WTC11 (cell line): ENCODE measurements at regions of chr7 and their contacts with region 1.

Region 1: GRCh38 chr7:50119815-50120637 is 27.0 kb upstream of the ZPBP start:
- DNase-seq: peak; percentile 57
- ATAC-seq: peak; percentile 94
- H3K4me3 Mint-ChIP-seq: no peak overlapping the region
- H3K27ac Mint-ChIP-seq: no peak overlapping the region
- H3K4me1 Mint-ChIP-seq: no peaks in the 10 kb centered on the region
- H3K27me3 Mint-ChIP-seq: no peaks in the 10 kb centered on the region
- CTCF ChIP-seq: peak; percentile 51; the same call in 1 of the 2 replicates

Region 2: GRCh38 chr7:50092579-50093491 is 27.2 kb before region 1 on chr7 and contains the start of gene ZPBP:
- CTCF ChIA-PET with region 1: interaction called, 10 read pairs
- POLR2A ChIA-PET with region 1: no interaction called
- DNase-seq: peak; percentile 41
- ATAC-seq: peak; percentile 82
- H3K4me3 Mint-ChIP-seq: peak within 1 kb of the TSS; percentile 77
- H3K27ac Mint-ChIP-seq: peak within 1 kb of the TSS; percentile 33; the same call in 1 of the 2 replicates
- H3K4me1 Mint-ChIP-seq: peaks cover 3% of the 10 kb centered on the region
- H3K27me3 Mint-ChIP-seq: peaks cover 15% of the 10 kb centered on the region
- CTCF ChIP-seq: peak; percentile 77
- total RNA-seq, gene ZPBP: not detected in 3 replicates

Region 3: GRCh38 chr7:50397320-50397970 is 277.4 kb after region 1 on chr7:
- CTCF ChIA-PET with region 1: no interaction called
- POLR2A ChIA-PET with region 1: no interaction called
- DNase-seq: no peak
- ATAC-seq: no peak
- H3K4me3 Mint-ChIP-seq: no peak overlapping the region
- H3K27ac Mint-ChIP-seq: no peak overlapping the region
- H3K4me1 Mint-ChIP-seq: 0 out of 2 replicates have a peak, but pooled peaks cover 9% of the 10 kb centered on the region
- H3K27me3 Mint-ChIP-seq: peaks cover 6% of the 10 kb centered on the region
- CTCF ChIP-seq: no peak